GM10248 (cell line): ENCODE measurements at regions of chr22 and their contacts with region 1.

Region 1: DNA sequence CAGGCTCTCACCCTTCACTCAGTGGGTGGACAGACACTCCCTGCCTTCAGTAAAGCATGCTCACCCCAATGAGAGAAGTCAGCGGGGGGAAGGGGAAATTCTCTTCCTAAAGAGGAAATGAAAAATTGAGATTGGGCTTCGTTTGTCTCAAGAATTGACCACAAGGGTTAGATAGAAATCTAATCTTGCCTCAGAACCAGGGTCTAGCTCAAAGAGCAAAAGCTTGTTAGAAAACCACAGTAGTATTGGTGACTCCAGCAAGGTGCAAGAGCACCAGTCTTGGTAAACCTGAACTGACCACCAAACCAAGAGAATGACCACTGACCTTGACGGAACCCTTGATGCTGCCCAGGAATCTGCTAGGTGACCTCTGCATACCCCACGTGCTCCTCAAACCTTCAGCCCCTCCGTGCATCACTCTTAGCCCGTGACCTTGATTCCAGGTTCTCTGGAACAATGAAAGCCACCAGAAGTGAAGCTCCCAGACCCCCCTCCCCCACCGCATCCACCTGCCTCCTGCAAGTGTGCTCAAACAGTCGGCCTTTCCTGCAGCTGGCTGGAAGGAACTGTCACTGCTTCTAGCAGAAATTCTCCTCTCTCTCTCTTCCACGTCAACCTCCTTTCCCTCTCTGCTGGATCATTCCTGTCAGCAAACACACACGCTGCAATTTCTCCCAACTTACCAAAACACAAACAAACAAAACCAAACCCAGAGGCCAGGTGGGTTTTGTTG is 3.1 kb upstream of the TMA7B start:
- DNase-seq: peak; percentile 40
- CTCF ChIP-seq: no peak

Region 2: DNA sequence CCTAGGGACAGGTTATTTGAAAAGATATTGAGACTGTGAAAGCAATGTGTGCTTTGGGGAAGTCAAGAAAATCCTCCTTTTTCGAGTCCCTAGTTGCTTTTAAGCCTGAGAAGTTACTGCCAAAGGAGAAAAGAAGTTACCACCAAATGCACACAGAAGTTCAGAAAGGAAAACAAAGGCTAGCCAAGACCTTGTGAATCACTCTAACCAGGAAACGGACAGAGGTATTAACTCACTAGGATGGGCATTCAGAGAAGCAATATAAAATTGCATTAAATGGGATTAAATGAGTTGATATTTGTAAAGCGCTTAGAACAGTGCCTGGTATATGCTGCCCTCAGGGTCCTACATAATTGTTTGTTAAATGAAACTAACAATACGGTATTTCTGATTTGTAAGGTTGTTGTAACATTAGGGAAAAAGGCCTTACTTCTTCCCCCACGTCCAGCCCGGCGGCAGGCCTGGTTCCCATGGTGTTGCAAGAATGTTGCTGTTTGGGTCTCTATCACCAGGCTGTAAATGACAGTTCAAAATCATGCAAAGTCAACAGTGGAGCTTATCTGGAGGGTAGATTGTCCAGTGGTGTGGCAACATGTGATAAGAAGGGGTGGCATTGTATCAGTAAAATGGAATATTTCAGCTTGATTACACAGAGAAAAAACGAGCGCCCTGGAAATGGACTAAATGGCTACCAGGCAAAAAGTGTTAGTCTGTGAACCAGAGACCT is 10.2 kb after region 1 on chr22:
- CTCF ChIA-PET with region 1: interaction called, 10 read pairs
- POLR2A ChIA-PET with region 1: no interaction called
- DNase-seq: no peak
- CTCF ChIP-seq: no peak

Region 3: GRCh38 chr22:40036591-40037225 is 79.6 kb after region 1 on chr22:
- CTCF ChIA-PET with region 1: no interaction called
- POLR2A ChIA-PET with region 1: no interaction called
- DNase-seq: peak; percentile 72
- CTCF ChIP-seq: peak; percentile 85